Dendritic cell treated with granulocyte-macrophage colony-stimulating factor and Interleukin-4, amounts not matched to agents 40 ng/mL and 50 ng/mL, for 4 days (primary cell): ENCODE measurements at regions of chr13 and their contacts with region 1.

Region 1: GRCh38 chr13:22793598-22794134 is 387.1 kb upstream of the SGCG start:
- H3K4me3 Mint-ChIP-seq: no peak overlapping the region
- H3K27ac Mint-ChIP-seq: no peak overlapping the region
- H3K4me1 Mint-ChIP-seq: peaks cover 5% of the 10 kb centered on the region
- H3K27me3 Mint-ChIP-seq: peaks cover 5% of the 10 kb centered on the region

Region 2: DNA sequence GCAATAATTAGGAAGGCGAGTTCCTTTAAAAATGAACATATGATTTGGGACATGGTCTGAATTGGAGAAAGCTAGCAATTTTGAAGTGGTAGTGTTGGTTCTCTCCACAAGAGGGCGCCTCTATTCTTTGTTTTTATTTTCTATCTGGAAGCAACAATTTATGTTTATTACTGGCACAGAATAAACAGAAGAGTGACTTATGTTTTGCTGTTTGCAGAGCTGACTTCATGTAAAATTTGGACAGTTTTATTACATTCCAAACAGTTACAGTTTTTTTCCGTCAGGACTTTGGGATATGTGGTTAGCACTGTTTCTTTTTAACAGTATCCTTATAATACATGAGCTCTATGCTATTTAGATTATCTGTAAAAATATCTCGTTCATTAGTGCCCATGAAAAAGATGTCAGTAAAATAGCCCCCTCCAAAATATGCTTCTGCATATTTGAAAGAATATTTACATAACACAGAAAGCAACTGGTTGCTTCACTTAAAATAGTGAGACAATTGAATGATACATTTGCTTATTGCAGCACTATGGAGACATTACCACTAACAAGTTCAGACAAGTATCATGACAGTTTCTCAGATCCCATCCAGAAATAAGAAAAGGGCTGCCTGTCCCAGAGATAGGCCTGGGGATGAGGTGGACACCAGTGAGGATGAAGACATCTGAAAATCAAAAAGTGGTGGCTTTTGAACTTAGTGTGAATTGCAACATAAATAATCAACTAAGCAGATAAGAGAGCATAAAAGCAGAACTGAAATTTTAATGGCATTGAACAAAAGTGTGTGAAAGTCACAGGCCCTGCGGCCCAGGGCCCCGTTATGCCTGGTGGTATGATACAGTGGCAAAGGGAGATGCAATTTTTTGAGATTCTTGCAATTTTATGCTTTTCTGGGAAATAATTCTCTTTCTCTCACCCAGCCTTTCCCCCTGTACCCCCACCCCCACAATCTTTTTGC is 1155.1 kb before region 1 on chr13:
- intact Hi-C with region 1: loop called (anchors 5 kb)
- H3K4me3 Mint-ChIP-seq: no peak overlapping the region
- H3K27ac Mint-ChIP-seq: no peak overlapping the region
- H3K4me1 Mint-ChIP-seq: peaks cover 4% of the 10 kb centered on the region
- H3K27me3 Mint-ChIP-seq: peaks cover 4% of the 10 kb centered on the region

Region 3: DNA sequence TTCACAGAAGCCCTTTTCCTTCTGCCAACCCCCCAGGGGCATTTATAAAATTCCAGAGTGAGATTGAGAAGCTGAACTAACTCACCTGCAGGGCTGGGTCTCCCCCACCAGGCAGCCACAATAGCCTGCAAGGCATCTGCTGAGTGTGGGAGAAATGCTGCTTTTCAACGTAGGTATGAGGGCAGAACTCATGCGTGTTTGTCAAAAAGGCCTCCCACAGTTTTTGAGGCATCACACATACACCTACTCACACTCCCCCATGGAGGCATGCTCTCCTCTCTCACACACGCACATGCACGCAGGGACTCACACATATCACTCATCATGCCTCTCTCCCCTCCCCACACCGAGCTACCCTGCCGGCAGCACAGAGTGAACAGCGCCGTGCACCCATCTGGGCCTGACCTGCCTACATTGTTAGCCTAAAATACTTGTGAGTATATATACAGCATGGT is 732.3 kb before region 1 on chr13:
- intact Hi-C with region 1: no loop called
- H3K4me3 Mint-ChIP-seq: no peak overlapping the region
- H3K27ac Mint-ChIP-seq: no peak overlapping the region
- H3K4me1 Mint-ChIP-seq: peaks cover 4% of the 10 kb centered on the region
- H3K27me3 Mint-ChIP-seq: peaks cover 2% of the 10 kb centered on the region

Region 4: GRCh38 chr13:22866221-22866620 is 72.6 kb after region 1 on chr13:
- intact Hi-C with region 1: no loop called
- H3K4me3 Mint-ChIP-seq: no peak overlapping the region
- H3K27ac Mint-ChIP-seq: no peak overlapping the region
- H3K4me1 Mint-ChIP-seq: no peaks in the 10 kb centered on the region
- H3K27me3 Mint-ChIP-seq: no peaks in the 10 kb centered on the region